ENCODE measurements at regions of chr6 and their contacts with region 1.

Region 1: GRCh38 chr6:11386323-11386722 is 151.2 kb upstream of the TMEM170B start:
- DNase-seq: no peak
- ATAC-seq: no peak
- H3K4me3 ChIP-seq: no peak overlapping the region
- H3K27ac ChIP-seq: no peak overlapping the region
- H3K4me1 ChIP-seq: peaks cover 0 to 14% of the 10 kb centered on the region in 2 donors
- H3K27me3 ChIP-seq: no peaks in the 10 kb centered on the region
- CTCF ChIP-seq: no peak
- POLR2A ChIP-seq: no peak

Region 2: GRCh38 chr6:11350294-11350969 is 35.9 kb before region 1 on chr6:
- in situ Hi-C with region 1: no loop called
- intact Hi-C with region 1: no loop called
- DNase-seq: peak in 1 of 2 donors; percentile 37
- ATAC-seq: peak in 1 of 2 donors; percentile 40
- H3K4me3 ChIP-seq: no peak overlapping the region
- H3K27ac ChIP-seq: no peak overlapping the region
- H3K4me1 ChIP-seq: peaks cover 3 to 6% of the 10 kb centered on the region in 2 donors
- H3K27me3 ChIP-seq: no peaks in the 10 kb centered on the region
- CTCF ChIP-seq: no peak
- POLR2A ChIP-seq: no peak

Region 3: GRCh38 chr6:11366183-11366933 is 20.0 kb before region 1 on chr6:
- in situ Hi-C with region 1: no loop called
- intact Hi-C with region 1: loop called (anchors 2 kb)
- DNase-seq: no peak
- ATAC-seq: no peak
- H3K4me3 ChIP-seq: no peak overlapping the region
- H3K27ac ChIP-seq: peak overlapping the region; percentile 79 to 88 (median 83)
- H3K4me1 ChIP-seq: peaks cover 0 to 23% of the 10 kb centered on the region in 2 donors
- H3K27me3 ChIP-seq: no peaks in the 10 kb centered on the region
- CTCF ChIP-seq: no peak
- POLR2A ChIP-seq: no peak